Vagina (tissue), 2 donors: ENCODE measurements at regions of chr12 and their contacts with region 1.

Region 1: GRCh38 chr12:62799126-62799736 is 135.7 kb downstream of the PPM1H start:
- DNase-seq: no peak
- H3K4me3 ChIP-seq: no peak overlapping the region
- H3K27ac ChIP-seq: no peak overlapping the region
- H3K4me1 ChIP-seq: no peaks in the 10 kb centered on the region
- H3K27me3 ChIP-seq: no peaks in the 10 kb centered on the region
- CTCF ChIP-seq: peak; percentile 74 to 85 (median 76)
- POLR2A ChIP-seq: no peak

Region 2: GRCh38 chr12:62435303-62436163 is 363.7 kb before region 1 on chr12:
- intact Hi-C with region 1: loop called (anchors 10 kb)
- DNase-seq: no peak
- H3K4me3 ChIP-seq: peak overlapping the region; percentile 38 to 51
- H3K27ac ChIP-seq: no peak overlapping the region
- H3K4me1 ChIP-seq: peaks cover 15% of the 10 kb centered on the region
- H3K27me3 ChIP-seq: no peaks in the 10 kb centered on the region
- CTCF ChIP-seq: peak in 1 of 3 experiments; percentile 8
- POLR2A ChIP-seq: no peak